ENCODE measurements at regions of chr1 and their contacts with region 1.

Region 1: DNA sequence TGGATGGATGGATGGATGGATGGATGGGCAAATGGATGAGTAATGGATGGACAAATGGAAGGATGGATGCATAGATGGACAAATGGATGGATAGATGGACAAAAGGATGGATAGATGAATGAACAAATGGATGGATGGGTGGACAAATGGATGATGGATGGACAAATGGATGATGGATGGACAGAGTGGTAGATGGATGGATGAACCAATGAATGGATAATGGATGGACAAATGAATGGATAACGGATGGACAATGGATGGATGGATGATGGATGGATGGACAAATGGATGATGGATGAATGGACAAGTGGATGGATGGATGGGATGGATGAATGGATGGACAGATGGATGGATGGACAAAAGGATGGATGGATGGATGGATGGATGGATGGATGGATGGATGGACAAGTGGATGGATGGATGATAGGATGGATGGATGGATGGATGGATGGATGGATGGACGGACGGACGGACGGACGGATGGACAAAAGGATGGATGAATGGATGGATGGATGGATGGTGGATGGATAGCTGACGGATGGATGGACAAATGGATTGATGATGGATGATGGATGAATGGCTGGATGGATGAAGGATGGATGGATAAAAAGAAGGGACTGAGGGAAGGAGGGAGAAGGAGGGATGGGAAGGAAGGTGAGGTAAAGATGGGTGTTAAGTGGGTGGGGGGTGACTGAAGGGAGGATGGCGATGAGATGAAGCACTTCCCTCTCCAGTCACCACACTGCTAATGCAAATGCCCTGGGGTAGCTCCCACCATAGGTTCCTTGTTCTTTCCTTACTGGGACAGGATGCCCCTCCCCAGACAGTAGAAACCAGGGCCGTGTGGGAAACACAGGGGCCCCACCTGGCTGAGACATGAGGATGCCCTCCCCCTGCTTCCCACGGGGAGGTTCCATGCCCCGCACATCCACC is 29.8 kb downstream of the CHD5 start:
- DNase-seq: no peak
- H3K4me3 Mint-ChIP-seq: no peak overlapping the region
- H3K27ac Mint-ChIP-seq: no peak overlapping the region
- H3K4me1 Mint-ChIP-seq: no peaks in the 10 kb centered on the region
- H3K27me3 Mint-ChIP-seq: peaks cover 13% of the 10 kb centered on the region
- CTCF ChIP-seq: no peak

Region 2: DNA sequence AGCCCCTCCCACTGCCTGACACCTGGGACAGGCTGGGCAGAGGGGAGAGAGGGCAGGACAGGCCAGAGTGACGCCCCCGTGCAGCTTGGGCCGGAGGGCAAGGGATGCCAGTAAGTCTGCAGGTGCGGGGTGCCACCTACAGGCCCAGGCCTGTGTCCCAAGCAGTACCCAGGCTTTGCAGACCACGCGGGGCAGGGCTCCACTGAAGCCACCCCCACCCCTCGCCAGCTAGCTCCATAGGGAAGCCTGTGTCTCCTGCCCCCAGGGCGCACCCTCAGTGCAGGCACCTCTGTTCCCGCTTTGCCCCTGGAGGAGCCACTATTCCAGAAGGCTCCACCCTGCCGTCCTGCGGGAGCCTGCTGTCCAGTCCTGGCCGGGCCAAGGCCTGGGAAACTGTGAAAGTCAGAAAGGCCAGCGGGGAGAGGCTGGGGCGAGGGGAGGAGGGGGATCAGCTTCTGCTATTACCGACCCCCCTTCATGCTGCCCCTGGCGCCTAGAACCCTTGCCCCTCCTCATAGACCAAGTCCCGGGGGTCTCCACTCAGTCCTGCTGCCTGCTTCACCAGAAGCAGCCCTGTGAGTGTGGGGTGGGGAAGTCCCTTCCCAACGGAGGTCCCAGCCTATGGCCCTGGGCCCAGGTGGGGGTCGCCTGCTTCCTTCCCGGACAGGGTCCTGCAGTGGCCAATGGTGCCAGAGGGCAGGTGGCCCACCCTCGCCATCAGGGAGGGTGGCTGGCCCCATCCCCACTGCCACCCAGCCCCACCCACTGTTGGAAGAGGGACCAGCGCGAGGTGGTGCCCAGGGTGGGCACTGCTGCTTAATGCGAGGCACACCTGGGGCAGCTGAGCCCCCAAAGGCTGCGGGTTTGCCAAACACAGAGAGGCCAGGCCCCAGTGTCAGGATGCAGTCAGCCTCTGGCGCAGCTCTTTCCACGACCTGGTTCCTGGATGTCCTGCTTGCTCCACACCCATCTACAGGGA is 50.2 kb before region 1 on chr1:
- CTCF ChIA-PET with region 1: no interaction called
- intact Hi-C with region 1: no loop called
- DNase-seq: peak; percentile 33
- H3K4me3 Mint-ChIP-seq: no peak overlapping the region
- H3K27ac Mint-ChIP-seq: no peak overlapping the region
- H3K4me1 Mint-ChIP-seq: no peaks in the 10 kb centered on the region
- H3K27me3 Mint-ChIP-seq: peaks cover 44% of the 10 kb centered on the region
- CTCF ChIP-seq: no peak

Region 3: GRCh38 chr1:8053878-8054567 is 1903.8 kb after region 1 on chr1:
- CTCF ChIA-PET with region 1: interaction called, 10 read pairs
- intact Hi-C with region 1: no loop called
- DNase-seq: no peak
- H3K4me3 Mint-ChIP-seq: no peak overlapping the region
- H3K27ac Mint-ChIP-seq: no peak overlapping the region
- H3K4me1 Mint-ChIP-seq: peaks cover 27% of the 10 kb centered on the region
- H3K27me3 Mint-ChIP-seq: no peaks in the 10 kb centered on the region
- CTCF ChIP-seq: no peak